ENCODE measurements at regions of chr14 and their contacts with region 1.

Region 1: GRCh38 chr14:77760381-77761246 is at the start of gene SNW1:
- DNase-seq: peak; percentile 92 to 95 (median 94)
- ATAC-seq: peak; percentile 94 to 98 (median 97)
- H3K4me3 ChIP-seq: peak within 1 kb of the TSS; percentile 72 to 100 (median 90)
- H3K27ac ChIP-seq: peak within 1 kb of the TSS; percentile 75 to 99 (median 94)
- H3K4me1 ChIP-seq: peaks cover 0 to 45% (median 25%) of the 10 kb centered on the region in 12 donors
- H3K27me3 ChIP-seq: no peaks in the 10 kb centered on the region
- CTCF ChIP-seq: no peak
- POLR2A ChIP-seq: peak in 1 of 2 donors; percentile 64
- total RNA-seq, gene SNW1: 29.4 to 67.3 (median 47.7) TPM

Region 2: GRCh38 chr14:77516126-77516525 is 244.5 kb before region 1 on chr14:
- intact Hi-C with region 1: no loop called
- DNase-seq: no peak
- ATAC-seq: no peak
- H3K4me3 ChIP-seq: no peak overlapping the region
- H3K27ac ChIP-seq: no peak overlapping the region
- H3K4me1 ChIP-seq: no peaks in the 10 kb centered on the region
- H3K27me3 ChIP-seq: no peaks in the 10 kb centered on the region
- CTCF ChIP-seq: no peak
- POLR2A ChIP-seq: no peak

Region 3: DNA sequence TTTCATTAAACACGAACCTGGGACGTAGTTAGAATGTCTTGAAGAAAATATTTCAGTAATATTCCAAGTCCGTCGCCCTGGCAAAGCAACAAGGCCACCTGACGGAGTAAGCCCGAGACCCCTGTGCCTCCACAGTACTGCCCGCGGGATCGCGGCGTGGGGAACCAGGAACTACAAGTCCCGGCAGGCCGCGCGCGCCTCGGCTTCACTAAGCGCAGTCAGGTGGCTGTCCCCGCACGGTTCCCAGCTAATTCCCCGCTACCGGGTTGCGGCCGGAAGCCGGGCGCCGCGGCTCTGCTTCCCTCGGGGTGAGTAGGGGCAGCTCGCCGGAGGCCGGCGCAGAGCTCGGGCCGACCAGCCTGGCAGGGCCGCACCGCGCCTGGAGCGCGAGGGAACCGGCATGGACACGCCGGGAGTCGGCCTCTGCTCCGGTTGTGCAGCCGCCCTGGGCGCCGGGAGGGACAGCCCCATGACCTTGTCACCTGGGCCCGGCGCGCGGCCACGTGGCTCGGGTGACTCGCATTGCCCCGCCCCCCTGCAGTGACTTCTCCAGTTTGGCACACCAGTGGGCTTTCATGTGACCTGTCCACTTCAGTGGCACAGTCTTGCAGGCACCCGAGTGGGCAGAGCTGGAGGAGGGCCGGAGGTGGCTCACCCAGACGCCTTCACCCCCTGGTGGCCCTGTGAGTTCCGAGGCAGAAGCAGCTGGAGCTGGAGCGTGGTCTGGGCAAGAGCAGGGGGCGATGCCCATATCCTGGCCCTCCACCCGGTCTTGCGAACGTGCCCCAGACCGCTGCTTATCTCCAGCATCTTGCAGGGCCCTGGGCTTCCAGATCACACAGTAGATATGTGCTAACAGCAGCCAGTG is 39.5 kb after region 1 on chr14 and contains the start of gene ADCK1:
- intact Hi-C with region 1: loop called in 4 of 10 experiments (anchors 1 to 5 kb)
- DNase-seq: peak; percentile 91 to 95 (median 94)
- ATAC-seq: peak; percentile 92 to 98 (median 96)
- H3K4me3 ChIP-seq: peak within 1 kb of the TSS; percentile 56 to 100 (median 82)
- H3K27ac ChIP-seq: peak within 1 kb of the TSS; percentile 72 to 98 (median 92)
- H3K4me1 ChIP-seq: peaks cover 0 to 16% (median 7%) of the 10 kb centered on the region in 12 donors
- H3K27me3 ChIP-seq: no peaks in the 10 kb centered on the region
- CTCF ChIP-seq: peak in 8 of 12 donors; percentile 7 to 51 (median 32)
- POLR2A ChIP-seq: peak in 1 of 2 donors; percentile 78
- total RNA-seq, gene ADCK1: 4.0 to 12.0 (median 6.0) TPM

Region 4: DNA sequence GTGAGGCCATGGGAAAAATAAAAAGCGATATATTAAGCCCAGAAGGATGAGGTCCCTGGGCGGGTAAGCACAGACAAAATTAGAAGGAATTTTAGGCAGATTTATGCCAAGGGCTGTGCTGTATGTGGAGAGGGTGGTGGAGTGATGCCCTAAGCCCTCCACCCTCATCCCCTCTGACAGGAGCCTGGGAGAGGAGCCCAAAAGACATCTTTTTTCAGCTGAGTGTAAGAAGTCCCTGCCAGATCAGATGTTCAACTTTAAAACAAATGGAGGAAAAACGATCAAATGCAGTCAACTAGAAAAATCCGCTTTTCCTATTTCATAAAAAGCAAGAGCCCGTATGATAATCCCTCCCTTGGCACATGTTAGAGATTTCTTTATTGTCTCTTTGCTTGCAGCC is 361.8 kb after region 1 on chr14:
- intact Hi-C with region 1: no loop called
- DNase-seq: no peak
- ATAC-seq: no peak
- H3K4me3 ChIP-seq: no peak overlapping the region
- H3K27ac ChIP-seq: no peak overlapping the region
- H3K4me1 ChIP-seq: no peaks in the 10 kb centered on the region
- H3K27me3 ChIP-seq: peaks cover 0 to 11% (median 0%) of the 10 kb centered on the region in 9 donors
- CTCF ChIP-seq: no peak
- POLR2A ChIP-seq: no peak

Measured in heart left ventricle (tissue), 16 donors.